ENCODE measurements at regions of chr15 and their contacts with region 1.

Region 1: GRCh38 chr15:82749951-82750830 is 40.5 kb upstream of the AP3B2 start:
- DNase-seq: peak; percentile 90 to 92
- ATAC-seq: peak; percentile 97 to 99 (median 98)
- H3K4me3 ChIP-seq: peak overlapping the region; percentile 53 to 92 (median 70)
- H3K27ac ChIP-seq: peak overlapping the region; percentile 77 to 94 (median 84)
- H3K4me1 ChIP-seq: peaks cover 2 to 28% (median 24%) of the 10 kb centered on the region in 9 donors
- H3K27me3 ChIP-seq: no peaks in the 10 kb centered on the region
- CTCF ChIP-seq: no peak

Region 2: GRCh38 chr15:82530606-82531379 is 219.4 kb before region 1 on chr15:
- intact Hi-C with region 1: loop called in 1 of 10 experiments (anchors 10 kb)
- DNase-seq: peak; percentile 58 to 62
- ATAC-seq: peak; percentile 74 to 92 (median 88)
- H3K4me3 ChIP-seq: peak overlapping the region in 4 of 10 donors; percentile 10 to 37 (median 23)
- H3K27ac ChIP-seq: peak overlapping the region in 2 of 10 donors; percentile 40 to 54
- H3K4me1 ChIP-seq: peaks cover 0 to 14% (median 8%) of the 10 kb centered on the region in 9 donors
- H3K27me3 ChIP-seq: no peaks in the 10 kb centered on the region
- CTCF ChIP-seq: peak; percentile 58 to 85 (median 81)

Region 3: GRCh38 chr15:82540055-82540983 is 209.9 kb before region 1 on chr15 and contains the start of gene RPS17:
- intact Hi-C with region 1: loop called in 4 of 10 experiments (anchors 5 to 10 kb)
- DNase-seq: peak; percentile 96 to 98
- ATAC-seq: peak; percentile 97 to 99 (median 98)
- H3K4me3 ChIP-seq: peak within 1 kb of the TSS; percentile 65 to 98 (median 88)
- H3K27ac ChIP-seq: peak within 1 kb of the TSS; percentile 51 to 96 (median 90)
- H3K4me1 ChIP-seq: peaks cover 2 to 47% (median 41%) of the 10 kb centered on the region in 9 donors
- H3K27me3 ChIP-seq: peaks cover 0 to 4% (median 0%) of the 10 kb centered on the region in 7 donors
- CTCF ChIP-seq: peak; percentile 98 to 100 (median 100)
- total RNA-seq, gene RPS17: 675 to 1,048 (median 736) TPM

Region 4: DNA sequence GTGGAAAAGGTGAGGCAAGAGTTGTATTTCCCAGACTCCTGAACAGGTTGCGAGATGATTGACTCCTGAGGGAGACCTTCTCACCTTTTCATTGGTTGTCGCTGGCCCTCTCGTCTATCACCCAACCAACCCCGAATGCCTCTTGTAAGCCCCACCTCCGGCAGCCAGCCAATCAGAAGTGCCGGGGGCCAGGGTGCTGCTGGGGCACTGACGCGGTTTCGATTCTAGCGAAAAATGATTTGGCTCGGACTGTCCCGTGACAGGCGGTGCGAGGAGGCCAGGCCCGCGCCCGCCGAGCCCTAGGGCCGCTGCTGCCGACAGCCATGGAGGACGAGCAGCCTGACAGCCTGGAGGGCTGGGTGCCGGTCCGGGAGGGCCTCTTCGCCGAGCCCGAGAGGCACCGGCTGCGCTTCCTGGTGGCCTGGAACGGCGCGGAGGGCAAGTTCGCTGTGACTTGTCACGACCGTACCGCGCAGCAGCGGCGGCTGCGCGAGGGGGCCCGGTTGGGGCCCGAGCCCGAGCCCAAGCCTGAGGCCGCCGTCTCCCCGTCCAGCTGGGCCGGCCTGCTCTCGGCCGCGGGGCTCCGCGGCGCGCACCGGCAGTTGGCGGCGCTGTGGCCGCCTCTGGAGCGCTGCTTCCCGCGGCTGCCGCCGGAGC is 59.3 kb after region 1 on chr15 and contains the start of gene WHAMM:
- intact Hi-C with region 1: loop called in 3 of 10 experiments (anchors 5 to 10 kb)
- DNase-seq: peak; percentile 98 to 99
- ATAC-seq: peak; percentile 94 to 98 (median 96)
- H3K4me3 ChIP-seq: peak within 1 kb of the TSS; percentile 65 to 96 (median 89)
- H3K27ac ChIP-seq: peak within 1 kb of the TSS; percentile 91 to 100 (median 99)
- H3K4me1 ChIP-seq: peaks cover 11 to 49% (median 33%) of the 10 kb centered on the region in 9 donors
- H3K27me3 ChIP-seq: no peaks in the 10 kb centered on the region
- CTCF ChIP-seq: peak in 1 of 9 donors; percentile 42
- total RNA-seq, gene WHAMM: 5.4 to 8.1 (median 6.8) TPM

Region 5: GRCh38 chr15:82882273-82882928 is 132.2 kb after region 1 on chr15:
- intact Hi-C with region 1: no loop called
- DNase-seq: no peak
- ATAC-seq: no peak
- H3K4me3 ChIP-seq: no peak overlapping the region
- H3K27ac ChIP-seq: no peak overlapping the region
- H3K4me1 ChIP-seq: no peaks in the 10 kb centered on the region
- H3K27me3 ChIP-seq: no peaks in the 10 kb centered on the region
- CTCF ChIP-seq: no peak